HEK293T (cell line): ENCODE measurements at regions of chr6 and their contacts with region 1.

Region 1: GRCh38 chr6:44630125-44631028 is 242.9 kb downstream of the CDC5L start:
- DNase-seq: peak; percentile 83

Region 2: GRCh38 chr6:44606504-44606903 is 23.9 kb before region 1 on chr6:
- CTCF ChIA-PET with region 1: no interaction called
- POLR2A ChIA-PET with region 1: no interaction called
- DNase-seq: no peak

Region 3: GRCh38 chr6:44645276-44645675 is 14.9 kb after region 1 on chr6:
- CTCF ChIA-PET with region 1: interaction called, 17 read pairs
- POLR2A ChIA-PET with region 1: no interaction called
- DNase-seq: peak; percentile 33

Region 4: DNA sequence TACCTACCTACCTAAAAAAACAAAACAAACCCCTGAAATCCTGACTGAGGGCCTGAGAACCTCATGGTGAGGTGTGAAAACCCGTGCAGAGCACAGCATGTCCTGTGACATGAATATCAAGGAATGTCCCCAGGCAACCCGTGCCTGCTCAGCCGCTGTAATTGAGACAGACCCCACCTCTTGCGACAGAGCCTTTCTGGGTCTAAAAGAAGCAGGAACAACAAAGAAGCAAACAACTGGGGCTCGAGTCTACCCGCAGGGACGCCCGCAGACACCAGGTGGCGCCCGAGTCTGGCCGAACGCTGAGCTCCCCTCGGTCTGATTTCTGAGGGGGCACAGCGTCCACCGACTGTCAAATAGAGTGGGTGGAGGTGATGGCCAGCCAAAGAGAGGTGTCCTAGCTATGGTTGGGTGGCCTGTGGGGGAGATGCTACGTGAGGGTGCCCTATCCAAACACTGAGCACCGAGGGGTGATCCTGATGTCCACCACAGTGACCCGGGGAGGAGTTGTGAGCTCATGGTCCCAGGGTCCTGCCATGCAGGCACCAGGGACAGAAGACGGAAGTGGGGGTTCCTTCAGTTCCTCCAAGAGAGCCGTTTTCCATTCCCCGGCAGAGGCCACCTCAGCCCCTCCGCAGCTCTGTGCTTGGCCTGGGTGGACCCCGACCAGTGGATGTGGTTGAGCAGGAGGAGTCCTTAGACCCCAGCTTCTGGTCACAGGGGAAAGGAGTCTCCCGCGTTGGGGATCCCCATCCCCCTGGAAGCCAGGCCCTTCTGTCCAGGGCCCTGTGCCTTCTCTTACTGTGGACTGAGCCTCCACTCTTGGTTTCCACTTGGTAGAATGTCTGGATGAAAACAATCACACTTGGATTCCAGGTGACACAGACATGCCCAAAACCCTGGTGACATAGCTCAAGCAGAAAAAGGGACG is 25.3 kb after region 1 on chr6:
- CTCF ChIA-PET with region 1: interaction called, 18 read pairs
- POLR2A ChIA-PET with region 1: no interaction called
- DNase-seq: peak; percentile 76

Region 5: DNA sequence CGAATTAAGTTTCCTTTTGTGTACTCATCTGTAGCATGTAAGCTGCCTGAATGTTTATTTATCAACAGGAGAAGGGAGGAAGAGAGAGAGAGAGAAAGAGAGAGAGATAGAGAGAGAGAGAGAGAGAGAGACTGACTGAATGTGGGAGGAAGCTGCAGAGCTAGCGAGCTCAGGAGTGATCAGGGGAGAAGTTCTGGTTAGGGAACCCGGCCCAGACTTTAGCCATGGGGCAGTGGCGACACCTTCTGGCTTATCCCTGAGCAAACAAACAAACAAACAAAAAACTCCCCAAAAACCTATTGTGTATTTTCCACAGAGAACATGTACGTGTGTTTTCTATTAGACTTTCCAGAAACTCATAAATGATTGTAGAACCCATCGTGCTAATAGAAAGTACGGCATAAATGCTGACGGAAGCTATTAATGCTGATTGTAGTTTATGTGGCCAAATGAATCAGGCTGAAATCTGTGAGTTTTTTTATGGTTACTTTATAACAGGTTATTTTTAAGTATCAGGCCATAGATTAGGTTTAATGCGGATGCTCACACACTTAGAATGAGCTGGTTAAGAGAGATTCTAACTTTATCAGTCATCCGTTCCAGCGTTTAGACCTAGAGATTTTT is 1292.5 kb after region 1 on chr6:
- CTCF ChIA-PET with region 1: interaction called, 11 read pairs
- POLR2A ChIA-PET with region 1: no interaction called
- DNase-seq: peak; percentile 60